Activated naive CD4-positive, alpha-beta T cell treated with anti-CD3 and anti-CD28 coated beads for 36 hours (primary cell): ENCODE measurements at regions of chr2 and their contacts with region 1.

Region 1: GRCh38 chr2:112275306-112275886 is at the start of gene ZC3H6:
- DNase-seq: peak; percentile 99
- H3K4me3 Mint-ChIP-seq: peak within 1 kb of the TSS; percentile 93
- H3K27ac Mint-ChIP-seq: peak within 1 kb of the TSS; percentile 97
- H3K4me1 Mint-ChIP-seq: peaks cover 24% of the 10 kb centered on the region
- H3K27me3 Mint-ChIP-seq: no peaks in the 10 kb centered on the region
- total RNA-seq, gene ZC3H6: 18.5 to 18.7 TPM

Region 2: DNA sequence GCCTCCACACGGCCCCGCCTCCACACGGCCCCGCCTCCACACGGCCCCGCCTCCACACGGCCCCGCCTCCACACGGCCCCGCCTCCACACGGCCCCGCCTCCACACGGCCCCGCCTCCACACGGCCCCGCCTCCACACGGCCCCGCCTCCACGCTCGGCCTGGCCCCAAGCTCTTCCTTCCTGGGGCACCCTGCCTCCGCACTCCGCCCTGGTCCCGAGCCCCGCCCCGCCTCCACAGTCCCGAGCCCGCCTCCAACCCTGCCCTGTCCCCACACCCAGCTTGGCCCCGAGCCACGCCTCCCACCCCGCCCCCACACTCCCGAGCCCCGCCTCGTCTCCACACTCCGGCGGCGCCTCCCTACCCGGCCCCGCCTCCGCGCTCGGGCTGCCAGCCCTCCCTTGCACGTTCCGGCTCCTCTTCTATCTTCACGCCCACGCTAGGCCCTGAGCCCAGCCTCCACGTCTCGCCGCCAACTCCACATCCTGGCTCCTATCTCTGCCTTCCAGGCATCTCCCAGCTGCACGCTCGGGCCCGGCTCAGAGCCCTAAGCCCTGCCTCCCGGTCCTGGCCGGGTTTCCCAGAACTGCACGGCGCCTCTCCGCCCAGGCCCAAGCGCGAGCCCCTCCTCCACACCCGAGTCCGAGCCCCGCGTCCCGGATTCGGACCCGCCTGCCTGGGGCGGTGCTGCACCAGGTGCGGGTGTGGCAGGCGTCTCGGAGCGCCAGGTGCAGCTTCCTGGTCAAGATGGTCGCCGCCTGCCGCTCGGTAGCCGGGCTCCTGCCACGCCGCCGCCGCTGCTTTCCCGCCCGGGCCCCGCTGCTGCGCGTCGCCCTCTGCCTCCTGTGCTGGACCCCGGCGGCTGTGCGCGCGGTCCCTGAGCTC is 220.3 kb before region 1 on chr2 and contains the start of gene TMEM87B:
- CTCF ChIA-PET with region 1: no interaction called
- intact Hi-C with region 1: loop called (anchors 1 kb)
- DNase-seq: peak; percentile 99
- H3K4me3 Mint-ChIP-seq: peak within 1 kb of the TSS; percentile 97
- H3K27ac Mint-ChIP-seq: peak within 1 kb of the TSS; percentile 99
- H3K4me1 Mint-ChIP-seq: peaks cover 42% of the 10 kb centered on the region
- H3K27me3 Mint-ChIP-seq: no peaks in the 10 kb centered on the region
- total RNA-seq, gene TMEM87B: 10.5 to 12.0 TPM

Region 3: GRCh38 chr2:112181571-112182290 is 93.7 kb before region 1 on chr2:
- CTCF ChIA-PET with region 1: no interaction called
- intact Hi-C with region 1: loop called (anchors 1 kb)
- DNase-seq: peak; percentile 73
- H3K4me3 Mint-ChIP-seq: peak overlapping the region; percentile 91
- H3K27ac Mint-ChIP-seq: peak overlapping the region; percentile 99
- H3K4me1 Mint-ChIP-seq: peaks cover 70% of the 10 kb centered on the region
- H3K27me3 Mint-ChIP-seq: no peaks in the 10 kb centered on the region

Region 4: DNA sequence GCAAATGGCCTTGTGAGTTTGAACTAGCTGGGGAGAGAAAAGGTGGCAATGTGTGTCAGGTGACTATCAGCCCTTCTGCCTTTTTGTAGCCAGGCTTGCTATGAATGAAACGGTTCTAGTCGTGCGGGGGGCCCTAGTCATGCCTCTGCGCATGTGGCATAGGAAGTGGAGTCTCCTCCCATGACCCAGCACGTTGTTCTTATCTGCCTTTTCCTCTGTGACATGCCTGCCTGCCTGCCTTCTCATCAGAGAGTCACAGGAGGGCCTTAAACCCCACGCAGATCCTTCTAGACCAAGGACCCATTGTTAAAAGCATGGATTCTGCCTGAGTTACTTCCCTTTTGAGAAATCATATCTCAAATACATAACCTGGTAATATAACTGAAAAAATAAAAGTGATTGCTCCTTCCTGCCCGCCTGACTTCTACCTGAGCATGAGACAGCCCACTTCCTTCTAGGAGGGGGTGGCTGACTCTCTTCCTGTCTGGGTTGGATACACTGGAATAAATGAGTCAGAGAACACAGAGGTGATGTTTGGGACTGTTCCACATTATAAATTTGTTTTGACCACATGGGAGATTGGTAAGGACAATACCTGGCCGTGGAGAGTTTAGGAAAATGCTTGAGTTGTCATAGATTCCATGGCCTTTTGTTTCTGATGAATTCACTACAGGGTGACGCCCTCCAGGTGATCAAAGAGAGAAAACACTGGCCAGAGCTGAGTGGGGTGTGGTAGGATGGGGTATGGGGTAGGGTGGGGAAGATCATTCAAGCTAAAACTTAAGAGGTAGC is 87.4 kb before region 1 on chr2:
- CTCF ChIA-PET with region 1: no interaction called
- intact Hi-C with region 1: loop called (anchors 1 kb)
- DNase-seq: peak; percentile 92
- H3K4me3 Mint-ChIP-seq: peak overlapping the region; percentile 63
- H3K27ac Mint-ChIP-seq: peak overlapping the region; percentile 99
- H3K4me1 Mint-ChIP-seq: peaks cover 87% of the 10 kb centered on the region
- H3K27me3 Mint-ChIP-seq: no peaks in the 10 kb centered on the region

Region 5: GRCh38 chr2:112259509-112260294 is 15.7 kb before region 1 on chr2:
- CTCF ChIA-PET with region 1: interaction called, 5 read pairs
- intact Hi-C with region 1: loop called (anchors 1 kb)
- DNase-seq: peak; percentile 95
- H3K4me3 Mint-ChIP-seq: peak overlapping the region; percentile 54
- H3K27ac Mint-ChIP-seq: no peak overlapping the region
- H3K4me1 Mint-ChIP-seq: peaks cover 9% of the 10 kb centered on the region
- H3K27me3 Mint-ChIP-seq: no peaks in the 10 kb centered on the region

Region 6: GRCh38 chr2:112481050-112481527 is 205.7 kb after region 1 on chr2:
- CTCF ChIA-PET with region 1: interaction called, 3 read pairs
- intact Hi-C with region 1: loop called (anchors 1 kb)
- DNase-seq: peak; percentile 91
- H3K4me3 Mint-ChIP-seq: peak overlapping the region; percentile 95
- H3K27ac Mint-ChIP-seq: peak overlapping the region; percentile 81
- H3K4me1 Mint-ChIP-seq: peaks cover 28% of the 10 kb centered on the region
- H3K27me3 Mint-ChIP-seq: no peaks in the 10 kb centered on the region

Region 7: DNA sequence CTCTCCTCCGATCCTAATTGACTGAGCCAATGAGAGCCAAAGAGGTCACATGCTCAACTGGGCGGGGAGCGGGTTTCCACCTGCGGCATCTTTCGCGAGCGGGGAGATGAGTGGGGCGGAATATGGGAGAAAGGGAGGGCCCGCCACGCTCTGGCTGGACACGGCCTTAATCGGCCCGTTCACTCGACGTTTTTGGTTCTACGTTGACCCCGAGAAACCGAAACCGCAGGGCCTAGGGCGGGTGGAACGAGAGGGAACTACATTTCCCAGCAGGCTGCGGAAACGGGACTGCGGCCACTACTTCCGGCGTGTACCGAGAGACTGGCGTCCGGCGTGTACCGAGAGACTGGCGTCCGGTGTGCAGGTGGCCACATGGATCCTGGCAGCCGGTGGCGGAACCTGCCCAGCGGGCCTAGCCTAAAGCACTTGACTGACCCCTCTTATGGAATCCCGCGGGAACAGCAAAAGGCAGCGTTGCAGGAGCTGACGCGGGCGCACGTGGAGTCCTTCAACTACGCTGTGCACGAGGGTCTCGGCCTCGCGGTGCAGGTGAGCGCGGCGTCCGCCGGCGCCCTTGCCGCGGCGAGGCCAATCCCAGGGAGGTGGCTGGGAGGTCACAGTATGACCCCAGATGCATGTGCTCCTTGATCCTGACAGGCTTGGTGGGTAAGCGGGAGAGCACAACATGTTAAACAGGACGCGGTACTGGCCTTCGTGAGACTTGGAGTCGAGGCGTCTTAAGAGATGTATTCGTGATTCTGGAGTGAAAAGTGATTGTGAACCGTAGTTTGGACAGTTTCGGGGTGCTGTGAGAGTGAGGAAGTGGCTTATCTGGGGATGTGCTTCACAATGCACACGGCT is 267.0 kb after region 1 on chr2 and contains the start of gene POLR1B:
- CTCF ChIA-PET with region 1: no interaction called
- intact Hi-C with region 1: loop called (anchors 2 kb)
- DNase-seq: peak; percentile 82
- H3K4me3 Mint-ChIP-seq: no peak within 1 kb of the TSS
- H3K27ac Mint-ChIP-seq: no peak within 1 kb of the TSS
- H3K4me1 Mint-ChIP-seq: peaks cover 19% of the 10 kb centered on the region
- H3K27me3 Mint-ChIP-seq: no peaks in the 10 kb centered on the region
- total RNA-seq, gene POLR1B: 34.5 to 36.1 TPM